ENCODE measurements at regions of chr17 and their contacts with region 1.

Region 1: DNA sequence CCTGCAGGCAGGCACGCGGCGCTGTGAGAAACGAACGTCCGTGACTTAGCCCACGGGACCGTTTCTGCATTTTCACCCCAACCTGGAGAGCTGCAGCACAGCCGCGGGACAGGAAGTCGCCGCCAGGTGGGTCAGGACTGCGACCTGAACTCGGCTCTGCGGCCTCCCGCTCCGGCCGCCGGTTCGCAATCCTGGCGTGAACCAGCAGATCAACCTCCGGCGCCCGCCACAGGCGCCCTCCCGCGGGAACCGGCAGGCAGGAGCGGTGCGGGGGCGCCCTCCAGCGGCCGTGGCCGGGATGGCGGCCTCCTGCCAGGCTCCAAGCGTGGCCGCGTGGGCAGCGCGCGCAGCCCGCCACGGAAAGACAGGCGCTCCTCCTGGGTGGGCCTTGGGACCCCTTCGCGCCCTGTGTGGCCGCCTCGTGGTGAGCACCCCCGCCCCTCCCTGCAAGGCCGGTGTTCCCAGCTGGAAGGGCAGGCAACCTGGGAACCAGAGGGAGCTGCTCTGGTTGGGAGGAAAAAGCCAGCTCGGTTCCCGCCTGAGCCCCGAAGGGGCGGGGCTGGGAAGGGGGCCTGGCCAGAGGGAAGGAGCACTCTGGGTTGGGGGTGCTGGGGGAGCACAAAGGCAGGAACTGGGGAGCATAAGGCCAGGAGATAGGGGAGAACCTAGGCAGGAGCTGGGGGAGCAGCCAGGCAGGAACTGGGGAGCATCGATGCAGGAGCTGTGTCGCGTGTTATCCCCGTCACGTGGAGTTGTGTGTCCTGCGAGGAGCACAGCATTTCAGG is 28.2 kb downstream of the ACTG1 start:
- DNase-seq: peak; percentile 84
- H3K4me3 ChIP-seq: peak overlapping the region; percentile 13 to 18
- H3K27ac ChIP-seq: no peak overlapping the region
- H3K4me1 ChIP-seq: peaks cover 11% of the 10 kb centered on the region
- H3K27me3 ChIP-seq: no peaks in the 10 kb centered on the region
- CTCF ChIP-seq: peak; percentile 99 to 100 (median 100)
- POLR2A ChIP-seq: peak; percentile 14

Region 2: DNA sequence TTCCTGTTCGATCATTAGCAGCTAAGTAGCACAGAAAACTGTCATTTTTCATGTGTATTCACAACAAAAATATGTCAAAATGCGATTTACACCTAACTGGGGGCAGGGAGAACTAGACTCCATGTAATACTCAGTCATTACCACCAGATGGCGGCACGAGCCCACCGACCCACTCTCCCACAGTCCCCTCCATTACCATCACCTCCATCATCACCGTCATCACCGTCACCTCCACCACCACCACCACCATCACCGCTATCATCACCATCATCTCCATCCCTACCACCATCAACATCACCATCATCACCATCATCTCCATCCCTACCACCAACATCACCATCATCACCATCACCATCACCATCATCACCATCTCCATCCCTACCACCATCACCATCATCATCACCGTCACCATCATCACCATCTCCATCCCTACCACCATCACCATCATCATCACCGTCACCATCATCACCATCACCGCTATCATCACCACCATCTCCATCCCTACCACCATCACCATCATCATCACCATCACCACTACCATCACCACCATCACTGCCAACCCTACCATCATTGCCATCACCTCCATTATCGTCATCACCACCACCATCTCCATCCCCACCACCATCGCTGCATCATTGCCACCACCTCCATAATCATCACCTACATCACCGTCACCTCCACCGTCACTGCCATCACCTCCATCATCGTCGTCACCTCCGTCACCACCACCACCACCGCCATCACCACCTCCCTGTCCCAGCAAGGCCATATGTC is 230.8 kb before region 1 on chr17:
- intact Hi-C with region 1: loop called (anchors 1 kb)
- DNase-seq: peak; percentile 37
- H3K4me3 ChIP-seq: no peak overlapping the region
- H3K27ac ChIP-seq: no peak overlapping the region
- H3K4me1 ChIP-seq: peaks cover 7% of the 10 kb centered on the region
- H3K27me3 ChIP-seq: no peaks in the 10 kb centered on the region
- CTCF ChIP-seq: peak; percentile 76 to 93 (median 88)
- POLR2A ChIP-seq: no peak

Region 3: GRCh38 chr17:81387100-81388090 is 97.0 kb before region 1 on chr17:
- intact Hi-C with region 1: loop called (anchors 5 kb)
- DNase-seq: peak; percentile 51
- H3K4me3 ChIP-seq: peak overlapping the region; percentile 62 to 86
- H3K27ac ChIP-seq: peak overlapping the region; percentile 98 to 99
- H3K4me1 ChIP-seq: peaks cover 18% of the 10 kb centered on the region
- H3K27me3 ChIP-seq: no peaks in the 10 kb centered on the region
- CTCF ChIP-seq: no peak
- POLR2A ChIP-seq: peak; percentile 43

Region 4: GRCh38 chr17:81733507-81734404 is 249.4 kb after region 1 on chr17:
- intact Hi-C with region 1: no loop called
- DNase-seq: peak; percentile 82
- H3K4me3 ChIP-seq: no peak overlapping the region
- H3K27ac ChIP-seq: no peak overlapping the region
- H3K4me1 ChIP-seq: no peaks in the 10 kb centered on the region
- H3K27me3 ChIP-seq: no peaks in the 10 kb centered on the region
- CTCF ChIP-seq: peak; percentile 70 to 97 (median 88)
- POLR2A ChIP-seq: no peak

Measured in prostate gland (tissue), 2 donors.